MCF 10A (cell line): ENCODE measurements at regions of chr10 and their contacts with region 1.

Region 1: DNA sequence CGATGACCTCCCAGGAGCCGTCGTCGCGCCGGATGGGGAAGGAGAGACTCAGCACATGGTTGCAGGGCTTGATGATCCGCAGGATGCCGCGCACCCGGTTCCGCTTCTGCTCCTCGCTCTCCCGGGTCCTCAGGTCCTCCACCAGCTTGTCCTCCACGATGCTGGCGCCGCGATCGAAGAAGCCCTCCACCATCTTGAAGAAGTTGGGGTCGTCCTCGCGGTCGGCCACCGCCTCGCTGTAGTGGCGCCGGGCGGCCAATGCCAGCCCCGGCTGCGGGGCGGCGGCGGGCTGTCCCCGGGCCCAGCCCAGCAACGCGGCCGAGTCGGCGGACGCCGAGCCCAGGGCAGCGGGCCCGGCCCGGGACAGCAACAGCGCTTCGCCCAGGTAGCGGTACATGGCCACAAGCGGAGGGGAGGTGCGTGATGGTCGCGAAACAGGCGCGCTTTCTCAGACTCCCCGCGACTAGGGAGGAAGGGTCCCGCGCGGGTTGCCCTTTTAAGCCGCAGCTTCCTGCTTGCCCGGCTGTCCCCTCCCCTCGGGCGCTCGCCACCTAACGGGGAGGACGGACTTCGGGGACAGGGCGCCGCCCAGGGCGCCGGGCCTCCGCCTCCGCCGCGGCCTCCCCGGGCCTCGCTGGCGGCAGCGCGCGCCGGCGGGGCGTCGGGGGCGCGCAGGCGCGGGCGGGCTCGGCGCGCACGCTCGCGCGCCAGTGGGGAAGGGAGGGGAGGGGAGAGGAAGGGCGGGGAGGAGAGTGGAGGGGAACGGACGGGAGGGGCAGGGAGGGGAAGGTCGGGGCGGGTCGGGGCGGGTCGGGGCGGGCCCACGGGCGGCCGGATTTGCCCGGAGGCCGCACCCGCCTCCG is at the starts of genes GLUD1 and SHLD2:
- DNase-seq: peak; percentile 93
- H3K4me3 Mint-ChIP-seq: peak within 1 kb of the TSS; percentile 74
- H3K27ac Mint-ChIP-seq: peak within 1 kb of the TSS; percentile 61
- H3K4me1 Mint-ChIP-seq: peaks cover 20% of the 10 kb centered on the region
- H3K27me3 Mint-ChIP-seq: no peaks in the 10 kb centered on the region
- CTCF ChIP-seq: no peak
- total RNA-seq, gene GLUD1: 171 and 275 TPM in 2 replicates
- total RNA-seq, gene SHLD2: 28.1 and 31.8 TPM in 2 replicates

Region 2: GRCh38 chr10:87072449-87072848 is 22.2 kb before region 1 on chr10:
- CTCF ChIA-PET with region 1: interaction called, 4 read pairs
- POLR2A ChIA-PET with region 1: interaction called, 26 read pairs
- intact Hi-C with region 1: no loop called
- DNase-seq: no peak
- H3K4me3 Mint-ChIP-seq: no peak overlapping the region
- H3K27ac Mint-ChIP-seq: no peak overlapping the region
- H3K4me1 Mint-ChIP-seq: no peaks in the 10 kb centered on the region
- H3K27me3 Mint-ChIP-seq: no peaks in the 10 kb centered on the region
- CTCF ChIP-seq: no peak

Region 3: GRCh38 chr10:87079106-87079836 is 15.3 kb before region 1 on chr10:
- CTCF ChIA-PET with region 1: interaction called, 21 read pairs
- POLR2A ChIA-PET with region 1: interaction called, 202 read pairs
- intact Hi-C with region 1: loop called (anchors 1 kb)
- DNase-seq: no peak
- H3K4me3 Mint-ChIP-seq: no peak overlapping the region
- H3K27ac Mint-ChIP-seq: no peak overlapping the region
- H3K4me1 Mint-ChIP-seq: peaks cover 29% of the 10 kb centered on the region
- H3K27me3 Mint-ChIP-seq: no peaks in the 10 kb centered on the region
- CTCF ChIP-seq: no peak